ENCODE measurements at regions of chrX and their contacts with region 1.

Region 1: GRCh38 chrX:103310542-103311398 is at the start of gene BEX2:
- DNase-seq: peak; percentile 71 to 92 (median 82)
- ATAC-seq: peak; percentile 99
- H3K4me3 ChIP-seq: peak within 1 kb of the TSS; percentile 63
- H3K4me3 Mint-ChIP-seq: peak within 1 kb of the TSS; percentile 89
- H3K27ac ChIP-seq: peak within 1 kb of the TSS in 1 of 2 donors; percentile 59
- H3K27ac Mint-ChIP-seq: peak within 1 kb of the TSS; percentile 71
- H3K4me1 ChIP-seq: peaks cover 9% of the 10 kb centered on the region
- H3K4me1 Mint-ChIP-seq: no peaks in the 10 kb centered on the region
- H3K27me3 ChIP-seq: no peaks in the 10 kb centered on the region
- H3K27me3 Mint-ChIP-seq: no peaks in the 10 kb centered on the region
- CTCF ChIP-seq: no peak
- total RNA-seq, gene BEX2: 46.4 to 49.3 TPM

Region 2: GRCh38 chrX:103107836-103108235 is 202.9 kb before region 1 on chrX:
- CTCF ChIA-PET with region 1: no interaction called
- POLR2A ChIA-PET with region 1: no interaction called
- intact Hi-C with region 1: no loop called
- DNase-seq: no peak
- ATAC-seq: no peak
- H3K4me3 ChIP-seq: no peak overlapping the region
- H3K4me3 Mint-ChIP-seq: no peak overlapping the region
- H3K27ac ChIP-seq: no peak overlapping the region
- H3K27ac Mint-ChIP-seq: no peak overlapping the region
- H3K4me1 ChIP-seq: no peaks in the 10 kb centered on the region
- H3K4me1 Mint-ChIP-seq: no peaks in the 10 kb centered on the region
- H3K27me3 ChIP-seq: no peaks in the 10 kb centered on the region
- H3K27me3 Mint-ChIP-seq: no peaks in the 10 kb centered on the region
- CTCF ChIP-seq: no peak

Region 3: DNA sequence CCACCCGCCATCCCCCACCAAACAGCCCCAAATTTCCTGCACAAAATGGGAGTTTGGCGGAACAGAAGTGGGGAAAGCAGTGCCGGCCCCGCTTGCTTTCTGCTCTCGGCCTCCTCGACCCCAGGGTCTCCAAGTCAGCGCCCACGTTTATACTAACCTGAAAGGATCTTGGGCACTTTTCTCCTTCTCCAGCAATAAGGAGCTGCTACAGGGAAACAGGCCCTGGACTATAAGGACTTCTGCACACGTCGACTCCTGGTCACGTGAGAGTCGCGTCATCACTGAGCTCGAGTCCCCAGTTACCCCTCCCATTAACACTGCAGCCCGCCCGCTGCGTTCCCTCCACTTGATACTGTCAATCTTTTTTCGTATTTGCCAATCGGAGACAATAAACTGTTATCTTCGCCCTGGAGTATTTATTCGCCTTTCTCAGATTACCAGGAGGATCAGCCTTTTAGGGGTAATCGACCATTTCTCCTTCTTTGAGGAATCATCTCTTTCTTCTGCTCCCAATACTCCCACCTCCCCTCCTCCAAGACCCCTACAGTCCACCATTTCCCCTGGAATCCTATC is 55.8 kb before region 1 on chrX and contains the start of gene TCEAL8:
- CTCF ChIA-PET with region 1: no interaction called
- POLR2A ChIA-PET with region 1: no interaction called
- intact Hi-C with region 1: loop called in 1 of 2 experiments (anchors 5 kb)
- DNase-seq: peak in 13 of 14 experiments; percentile 27 to 85 (median 47)
- ATAC-seq: peak; percentile 91
- H3K4me3 ChIP-seq: peak within 1 kb of the TSS; percentile 71
- H3K4me3 Mint-ChIP-seq: peak within 1 kb of the TSS; percentile 98
- H3K27ac ChIP-seq: peak within 1 kb of the TSS; percentile 65 to 79
- H3K27ac Mint-ChIP-seq: peak within 1 kb of the TSS; percentile 95
- H3K4me1 ChIP-seq: peaks cover 12% of the 10 kb centered on the region
- H3K4me1 Mint-ChIP-seq: peaks cover 32% of the 10 kb centered on the region
- H3K27me3 ChIP-seq: no peaks in the 10 kb centered on the region
- H3K27me3 Mint-ChIP-seq: no peaks in the 10 kb centered on the region
- CTCF ChIP-seq: no peak
- total RNA-seq, gene TCEAL8: 12.1 to 14.9 TPM